ENCODE measurements at regions of chr20 and their contacts with region 1.

Region 1: GRCh38 chr20:57412347-57413029 is 21.3 kb downstream of the RBM38 start:
- DNase-seq: peak in 1 of 3 donors; percentile 24
- H3K4me3 ChIP-seq: no peak overlapping the region
- H3K27ac ChIP-seq: no peak overlapping the region
- H3K4me1 ChIP-seq: peaks cover 0 to 27% (median 9%) of the 10 kb centered on the region in 4 experiments
- H3K27me3 ChIP-seq: no peaks in the 10 kb centered on the region

Region 2: DNA sequence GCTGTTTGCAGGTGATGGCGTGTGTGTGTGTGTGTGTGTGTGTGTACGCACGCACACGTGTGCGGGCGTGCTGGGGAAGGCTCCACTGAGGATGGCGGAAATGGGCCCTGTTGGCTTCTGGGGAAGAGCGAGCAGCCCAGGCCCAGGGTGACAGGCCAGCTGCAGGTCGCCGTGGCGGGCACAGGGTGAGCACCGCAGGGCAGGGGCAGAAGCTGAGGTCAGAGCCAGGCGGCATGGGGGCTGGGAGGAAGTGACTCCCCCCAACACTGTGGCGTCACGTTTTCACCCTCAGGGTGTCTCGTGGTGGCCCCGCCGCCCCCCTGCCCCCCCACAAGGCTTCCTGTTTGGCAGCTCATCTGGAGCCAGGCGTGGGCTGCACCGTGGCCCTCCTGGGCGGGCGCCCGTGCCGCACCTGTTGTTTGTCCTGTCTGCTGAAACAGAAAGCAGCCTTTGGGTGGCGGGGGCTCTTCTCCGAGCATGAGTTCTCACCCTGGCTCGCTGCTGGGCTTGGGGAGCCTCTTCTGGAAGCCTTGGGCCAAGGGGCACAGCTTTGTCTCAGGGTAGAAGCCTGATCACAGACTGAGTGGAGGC is 14.2 kb before region 1 on chr20:
- CTCF ChIA-PET with region 1: interaction called, 12 read pairs
- POLR2A ChIA-PET with region 1: interaction called, 8 read pairs
- DNase-seq: peak; percentile 89 to 98 (median 97)
- H3K4me3 ChIP-seq: peak overlapping the region in 4 of 7 experiments; percentile 11 to 60 (median 38)
- H3K27ac ChIP-seq: peak overlapping the region; percentile 64 to 70
- H3K4me1 ChIP-seq: peaks cover 8 to 49% (median 41%) of the 10 kb centered on the region in 4 experiments
- H3K27me3 ChIP-seq: no peaks in the 10 kb centered on the region

Measured in common myeloid progenitor, CD34-positive (primary cell).